ENCODE measurements at regions of chr6 and their contacts with region 1.

Region 1: GRCh38 chr6:88919032-88919431 is 44.4 kb downstream of the RNGTT start:
- DNase-seq: no peak
- ATAC-seq: no peak
- H3K4me3 ChIP-seq: no peak overlapping the region
- H3K27ac ChIP-seq: no peak overlapping the region
- H3K4me1 ChIP-seq: no peaks in the 10 kb centered on the region; a peak in 1 of 4 replicates
- H3K27me3 ChIP-seq: no peaks in the 10 kb centered on the region
- CTCF ChIP-seq: peak in 2 of 3 experiments; percentile 37 to 46; a peak in 4 of 6 replicates
- POLR2A ChIP-seq: no peak
- RAD21 ChIP-seq: peak; percentile 23; the same call in 1 of the 2 replicates

Region 2: GRCh38 chr6:88725111-88725975 is 193.7 kb before region 1 on chr6:
- CTCF ChIA-PET with region 1: no interaction called
- POLR2A ChIA-PET with region 1: no interaction called
- RAD21 ChIA-PET with region 1: no interaction called
- intact Hi-C with region 1: no loop called
- DNase-seq: no peak
- ATAC-seq: peak; percentile 55; the same call in 1 of the 2 replicates
- H3K4me3 ChIP-seq: no peak overlapping the region
- H3K27ac ChIP-seq: no peak overlapping the region
- H3K4me1 ChIP-seq: no peaks in the 10 kb centered on the region; a peak in 1 of 4 replicates
- H3K27me3 ChIP-seq: no peaks in the 10 kb centered on the region
- CTCF ChIP-seq: peak in 2 of 3 experiments; percentile 33; a peak in 4 of 6 replicates
- POLR2A ChIP-seq: no peak
- RAD21 ChIP-seq: no peak

Region 3: DNA sequence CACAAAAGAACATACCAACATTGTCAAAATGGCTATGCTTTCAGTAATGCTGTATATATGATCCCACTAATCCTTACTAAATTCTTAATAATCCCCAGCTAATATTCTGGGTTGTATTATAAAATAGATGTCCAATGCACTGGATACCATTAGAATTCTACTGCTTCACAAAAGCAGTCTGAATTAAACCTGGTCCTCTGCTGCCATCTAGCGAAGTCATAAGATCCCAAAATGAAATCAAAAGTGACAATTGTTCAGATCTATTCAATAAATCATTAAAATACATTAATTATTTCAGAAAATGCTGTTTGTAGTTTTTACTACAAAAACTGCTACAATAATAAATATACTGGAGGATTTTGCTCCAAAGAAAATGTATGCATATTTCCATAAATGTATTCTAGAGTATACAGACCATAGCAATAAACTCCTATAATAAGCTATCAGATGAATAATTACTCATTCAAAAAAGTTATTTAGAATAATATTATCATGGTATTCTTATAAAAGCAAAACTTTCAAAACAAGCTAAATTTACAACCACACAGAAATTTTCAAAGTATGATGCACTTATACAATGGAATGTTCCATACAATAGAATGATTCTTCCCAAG is 48.2 kb before region 1 on chr6:
- CTCF ChIA-PET with region 1: interaction called, 10 read pairs
- POLR2A ChIA-PET with region 1: no interaction called
- RAD21 ChIA-PET with region 1: no interaction called
- intact Hi-C with region 1: no loop called
- DNase-seq: peak; percentile 29
- ATAC-seq: peak; percentile 54; the same call in 1 of the 2 replicates
- H3K4me3 ChIP-seq: no peak overlapping the region
- H3K27ac ChIP-seq: no peak overlapping the region
- H3K4me1 ChIP-seq: peaks cover 0 to 8% of the 10 kb centered on the region in 2 experiments; a peak in 2 of 4 replicates
- H3K27me3 ChIP-seq: no peaks in the 10 kb centered on the region
- CTCF ChIP-seq: peak; percentile 33 to 68 (median 43); a peak in 3 of 6 replicates
- POLR2A ChIP-seq: no peak
- RAD21 ChIP-seq: peak; percentile 74

Region 4: DNA sequence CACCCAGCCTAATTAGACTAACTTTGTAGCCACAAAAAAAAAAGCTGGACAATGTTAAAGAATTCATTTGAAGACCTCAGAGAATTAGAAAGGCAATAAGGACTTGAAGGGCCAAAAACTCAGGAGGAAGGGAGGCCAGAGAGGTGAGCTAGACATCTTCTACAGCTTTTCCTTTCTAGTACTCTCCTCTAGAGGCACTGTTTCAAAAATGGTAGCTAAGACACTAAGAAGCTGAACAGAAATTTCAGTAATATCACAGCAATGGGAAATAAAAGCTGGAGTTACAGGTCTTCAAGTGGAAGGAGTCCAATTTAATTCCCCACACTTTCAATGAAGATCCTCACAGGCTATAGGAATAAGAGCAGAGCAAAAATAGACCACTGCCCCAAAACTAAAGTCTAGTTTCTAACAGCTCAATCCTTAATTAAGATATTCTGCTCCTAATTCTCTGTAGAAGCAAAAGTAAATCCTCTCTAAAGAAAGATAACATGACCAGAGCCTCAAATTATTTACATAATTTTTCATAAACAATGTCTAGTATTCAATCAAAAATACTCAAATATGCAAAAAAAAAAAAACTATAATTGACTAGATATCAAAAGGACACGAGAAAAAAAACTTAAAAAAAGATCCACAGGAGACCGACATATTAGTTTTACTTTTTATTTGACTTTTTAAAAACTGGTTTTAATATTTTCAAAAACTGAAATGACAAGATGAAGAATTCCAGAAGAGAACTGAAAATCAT is 19.3 kb before region 1 on chr6:
- CTCF ChIA-PET with region 1: interaction called, 20 read pairs
- POLR2A ChIA-PET with region 1: no interaction called
- RAD21 ChIA-PET with region 1: no interaction called
- intact Hi-C with region 1: no loop called
- DNase-seq: no peak
- ATAC-seq: peak; percentile 64; the same call in 1 of the 2 replicates
- H3K4me3 ChIP-seq: no peak overlapping the region
- H3K27ac ChIP-seq: no peak overlapping the region
- H3K4me1 ChIP-seq: no peaks in the 10 kb centered on the region
- H3K27me3 ChIP-seq: no peaks in the 10 kb centered on the region
- CTCF ChIP-seq: peak in 2 of 3 experiments; percentile 52 to 55; a peak in 4 of 6 replicates
- POLR2A ChIP-seq: no peak
- RAD21 ChIP-seq: no peak